PC-9 (cell line): ENCODE measurements at regions of chr12 and their contacts with region 1.

Region 1: GRCh38 chr12:116599285-116600136 is 40.3 kb downstream of the MAP1LC3B2 start:
- DNase-seq: peak in 1 of 2 experiments; percentile 55
- H3K4me3 ChIP-seq: no peak overlapping the region
- H3K27ac ChIP-seq: no peak overlapping the region
- H3K4me1 ChIP-seq: peaks cover 10% of the 10 kb centered on the region
- H3K27me3 ChIP-seq: no peaks in the 10 kb centered on the region
- CTCF ChIP-seq: peak; percentile 42; the same call in 1 of the 2 replicates

Region 2: GRCh38 chr12:115998119-115998633 is 601.3 kb before region 1 on chr12:
- CTCF ChIA-PET with region 1: no interaction called
- POLR2A ChIA-PET with region 1: no interaction called
- intact Hi-C with region 1: loop called (anchors 10 kb)
- DNase-seq: peak in 1 of 2 experiments; percentile 2
- H3K4me3 ChIP-seq: no peak overlapping the region
- H3K27ac ChIP-seq: 0 out of 2 replicates have a peak overlapping the region, but pooled peaks have one; percentile 34
- H3K4me1 ChIP-seq: peaks cover 9% of the 10 kb centered on the region; the same call in 1 of the 2 replicates
- H3K27me3 ChIP-seq: no peaks in the 10 kb centered on the region
- CTCF ChIP-seq: peak; percentile 94

Region 3: GRCh38 chr12:116142936-116143898 is 456.3 kb before region 1 on chr12:
- CTCF ChIA-PET with region 1: interaction called, 5 read pairs
- POLR2A ChIA-PET with region 1: no interaction called
- intact Hi-C with region 1: loop called (anchors 10 kb)
- DNase-seq: peak in 1 of 2 experiments; percentile 83
- H3K4me3 ChIP-seq: no peak overlapping the region
- H3K27ac ChIP-seq: peak overlapping the region; percentile 81
- H3K4me1 ChIP-seq: peaks cover 23% of the 10 kb centered on the region
- H3K27me3 ChIP-seq: no peaks in the 10 kb centered on the region
- CTCF ChIP-seq: no peak

Region 4: DNA sequence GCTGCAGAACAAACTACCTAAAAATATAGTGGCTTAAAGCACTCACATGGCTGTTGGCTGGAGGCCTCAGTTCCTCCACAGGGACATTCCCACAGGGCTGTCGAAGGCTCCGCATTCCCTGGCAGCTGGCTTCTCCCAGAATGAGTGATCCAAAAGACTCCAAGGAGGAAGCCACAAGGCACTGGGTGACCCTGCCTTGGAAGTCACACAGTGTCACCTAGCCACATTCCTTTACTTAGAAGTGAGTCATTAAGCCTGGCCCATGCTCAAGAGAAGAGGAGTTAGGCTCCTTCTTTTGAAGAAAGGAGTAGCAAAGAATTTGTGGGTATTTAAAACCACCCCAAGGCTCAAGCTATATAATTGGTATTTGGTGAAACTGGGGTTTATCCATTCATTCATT is 104.2 kb before region 1 on chr12:
- CTCF ChIA-PET with region 1: no interaction called
- POLR2A ChIA-PET with region 1: no interaction called
- intact Hi-C with region 1: loop called (anchors 2 kb)
- DNase-seq: peak; percentile 78 to 99
- H3K4me3 ChIP-seq: no peak overlapping the region
- H3K27ac ChIP-seq: peak overlapping the region; percentile 95
- H3K4me1 ChIP-seq: peaks cover 61% of the 10 kb centered on the region
- H3K27me3 ChIP-seq: no peaks in the 10 kb centered on the region
- CTCF ChIP-seq: no peak

Region 5: GRCh38 chr12:116568203-116568602 is 31.3 kb before region 1 on chr12:
- CTCF ChIA-PET with region 1: no interaction called
- POLR2A ChIA-PET with region 1: no interaction called
- intact Hi-C with region 1: no loop called
- DNase-seq: no peak
- H3K4me3 ChIP-seq: no peak overlapping the region
- H3K27ac ChIP-seq: no peak overlapping the region
- H3K4me1 ChIP-seq: no peaks in the 10 kb centered on the region
- H3K27me3 ChIP-seq: no peaks in the 10 kb centered on the region
- CTCF ChIP-seq: no peak

Region 6: DNA sequence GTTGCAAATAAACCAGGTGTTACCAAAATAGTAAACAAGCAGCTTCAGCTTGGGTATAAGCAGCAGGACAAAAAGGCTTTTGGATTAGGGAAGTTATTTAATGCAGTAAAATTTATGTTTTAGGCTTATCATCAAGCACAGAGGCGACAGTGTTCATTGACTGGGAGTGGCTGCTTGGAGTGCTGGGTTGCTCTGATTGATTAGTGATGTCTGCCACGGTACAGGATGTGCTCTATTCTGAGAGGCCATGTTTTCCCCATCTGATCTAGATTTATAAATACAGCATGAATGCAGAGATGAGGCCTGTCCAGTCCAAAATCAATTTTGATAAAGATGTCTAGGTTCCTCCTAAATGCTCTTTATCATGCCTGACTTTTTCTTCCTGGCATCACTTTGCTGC is 43.2 kb after region 1 on chr12:
- CTCF ChIA-PET with region 1: no interaction called
- POLR2A ChIA-PET with region 1: no interaction called
- intact Hi-C with region 1: no loop called
- DNase-seq: no peak
- H3K4me3 ChIP-seq: no peak overlapping the region
- H3K27ac ChIP-seq: no peak overlapping the region
- H3K4me1 ChIP-seq: no peaks in the 10 kb centered on the region
- H3K27me3 ChIP-seq: peaks cover 13% of the 10 kb centered on the region; the same call in 1 of the 2 replicates
- CTCF ChIP-seq: no peak

Region 7: DNA sequence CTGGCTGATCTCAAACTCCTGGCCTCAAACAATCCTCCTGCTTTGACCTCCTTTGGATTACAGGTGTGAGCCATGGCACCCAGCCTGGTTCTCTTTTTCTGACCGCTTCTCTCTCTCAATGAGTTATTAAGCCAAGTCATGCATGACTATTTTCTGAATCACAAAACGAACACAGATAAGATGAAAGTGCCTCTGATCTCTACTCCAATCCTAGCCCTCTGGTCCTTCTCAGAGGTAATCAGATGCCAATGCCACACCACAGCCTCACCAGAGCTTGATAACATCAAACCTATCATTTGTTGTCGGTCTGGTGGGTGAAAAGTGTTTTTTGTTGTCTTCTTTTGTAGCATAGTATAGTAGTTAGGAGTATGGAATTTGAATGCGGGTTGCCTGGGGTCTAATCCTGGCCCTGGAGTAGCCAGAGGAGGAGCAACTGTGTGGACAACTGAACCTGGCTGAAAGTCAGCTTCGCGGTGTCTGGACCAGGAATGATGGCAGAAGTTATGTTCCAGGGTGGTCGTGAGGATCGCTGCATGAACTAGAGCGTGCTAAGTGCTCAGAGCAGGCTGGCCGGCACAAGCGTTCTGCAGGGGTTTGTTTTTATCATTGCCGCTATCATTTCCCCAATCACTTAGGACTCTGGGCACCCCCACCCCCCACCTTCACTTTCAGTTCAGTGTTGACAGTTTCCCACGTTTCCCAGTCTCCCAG is 60.4 kb after region 1 on chr12:
- CTCF ChIA-PET with region 1: no interaction called
- POLR2A ChIA-PET with region 1: no interaction called
- intact Hi-C with region 1: loop called (anchors 5 kb)
- DNase-seq: peak; percentile 47 to 86
- H3K4me3 ChIP-seq: peak overlapping the region; percentile 24; the same call in 1 of the 2 replicates
- H3K27ac ChIP-seq: no peak overlapping the region
- H3K4me1 ChIP-seq: peaks cover 22% of the 10 kb centered on the region
- H3K27me3 ChIP-seq: peaks cover 7% of the 10 kb centered on the region; the same call in 1 of the 2 replicates
- CTCF ChIP-seq: no peak